ENCODE measurements at regions of chr3 and their contacts with region 1.

Region 1: GRCh38 chr3:119279101-119279554 is 15.1 kb upstream of the ARHGAP31 start:
- DNase-seq: no peak
- H3K4me3 Mint-ChIP-seq: no peak overlapping the region
- H3K27ac Mint-ChIP-seq: no peak overlapping the region
- H3K4me1 Mint-ChIP-seq: peaks cover 19% of the 10 kb centered on the region
- H3K27me3 Mint-ChIP-seq: no peaks in the 10 kb centered on the region

Region 2: GRCh38 chr3:119559441-119559963 is 280.4 kb after region 1 on chr3 and contains the start of gene CD80:
- CTCF ChIA-PET with region 1: interaction called, 3 read pairs
- intact Hi-C with region 1: loop called (anchors 1 kb)
- DNase-seq: peak; percentile 81
- H3K4me3 Mint-ChIP-seq: no peak within 1 kb of the TSS
- H3K27ac Mint-ChIP-seq: no peak within 1 kb of the TSS
- H3K4me1 Mint-ChIP-seq: peaks cover 10% of the 10 kb centered on the region
- H3K27me3 Mint-ChIP-seq: no peaks in the 10 kb centered on the region
- total RNA-seq, gene CD80: 0.14 to 0.40 TPM